ENCODE measurements at regions of chr14 and their contacts with region 1.

Region 1: GRCh38 chr14:54175298-54175942 is 218.8 kb upstream of the BMP4 start:
- DNase-seq: peak; percentile 54
- H3K4me3 ChIP-seq: no peak overlapping the region
- H3K27ac ChIP-seq: no peak overlapping the region
- H3K4me1 ChIP-seq: peaks cover 3 to 7% of the 10 kb centered on the region in 2 experiments; a peak in 2 of 4 replicates
- H3K27me3 ChIP-seq: no peaks in the 10 kb centered on the region
- CTCF ChIP-seq: peak; percentile 91
- EP300 ChIP-seq: no peak
- RAD21 ChIP-seq: peak; percentile 77

Region 2: DNA sequence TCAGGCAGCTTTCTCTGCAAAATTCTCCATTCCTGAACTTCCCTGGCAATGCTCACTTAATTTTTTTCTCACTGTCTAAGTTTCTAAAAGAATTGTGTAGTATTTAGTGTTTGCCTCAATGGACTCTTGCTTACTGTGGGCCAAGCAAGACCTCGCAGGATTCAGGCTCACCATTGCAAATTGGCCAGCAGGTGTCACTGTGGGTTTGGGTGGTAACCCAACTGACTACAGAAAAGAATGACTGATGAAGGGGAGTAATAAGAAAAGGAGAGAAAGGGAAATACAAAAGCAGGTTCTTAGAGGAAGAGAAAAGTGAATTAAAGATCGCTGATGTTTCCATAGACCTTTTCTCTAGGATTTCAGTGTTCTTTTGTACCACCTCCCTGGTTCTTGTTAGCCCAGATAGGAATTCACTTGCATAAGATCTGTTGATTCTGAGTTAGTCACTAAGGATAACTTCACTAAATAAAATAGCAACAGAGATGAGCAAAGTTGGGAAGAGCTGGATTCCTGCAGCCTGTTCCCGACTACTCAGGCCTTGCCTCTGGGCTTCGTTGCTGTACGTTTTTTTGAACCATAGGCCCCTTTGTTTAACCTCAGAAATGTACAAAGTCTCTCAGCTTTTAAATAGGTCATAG is 635.8 kb before region 1 on chr14:
- CTCF ChIA-PET with region 1: interaction called, 19 read pairs
- POLR2A ChIA-PET with region 1: no interaction called
- DNase-seq: peak; percentile 39
- H3K4me3 ChIP-seq: no peak overlapping the region; a peak in 1 of 4 replicates
- H3K27ac ChIP-seq: no peak overlapping the region
- H3K4me1 ChIP-seq: peaks cover 0 to 7% of the 10 kb centered on the region in 2 experiments; a peak in 1 of 4 replicates
- H3K27me3 ChIP-seq: no peaks in the 10 kb centered on the region; the same call in 1 of the 2 replicates
- CTCF ChIP-seq: peak; percentile 86
- EP300 ChIP-seq: no peak
- RAD21 ChIP-seq: peak; percentile 91

Region 3: GRCh38 chr14:54098536-54098935 is 76.9 kb before region 1 on chr14:
- CTCF ChIA-PET with region 1: no interaction called
- POLR2A ChIA-PET with region 1: no interaction called
- DNase-seq: no peak
- H3K4me3 ChIP-seq: no peak overlapping the region
- H3K27ac ChIP-seq: no peak overlapping the region
- H3K4me1 ChIP-seq: no peaks in the 10 kb centered on the region
- H3K27me3 ChIP-seq: no peaks in the 10 kb centered on the region
- CTCF ChIP-seq: no peak
- EP300 ChIP-seq: no peak
- RAD21 ChIP-seq: no peak

Region 4: DNA sequence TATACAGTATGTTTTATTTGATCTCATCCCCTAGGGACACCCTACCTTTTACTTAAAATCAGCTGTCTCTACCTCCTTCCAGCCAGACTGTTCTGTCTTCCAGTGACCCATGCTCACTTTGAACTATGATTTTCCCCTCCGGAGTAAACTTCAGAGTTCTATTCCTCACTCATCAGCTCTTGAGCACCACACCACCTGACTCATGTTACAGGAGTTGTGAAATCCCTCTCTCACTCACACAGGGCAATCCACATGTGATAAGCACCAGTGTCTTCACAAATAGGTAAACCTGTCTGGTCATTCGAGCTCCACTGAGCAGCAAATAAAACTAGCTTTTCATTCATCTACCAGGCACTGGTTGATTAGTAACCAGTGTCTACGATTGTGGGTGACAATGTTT is 41.5 kb before region 1 on chr14:
- CTCF ChIA-PET with region 1: interaction called, 12 read pairs
- POLR2A ChIA-PET with region 1: no interaction called
- DNase-seq: no peak
- H3K4me3 ChIP-seq: no peak overlapping the region
- H3K27ac ChIP-seq: no peak overlapping the region
- H3K4me1 ChIP-seq: no peaks in the 10 kb centered on the region
- H3K27me3 ChIP-seq: no peaks in the 10 kb centered on the region
- CTCF ChIP-seq: no peak
- EP300 ChIP-seq: no peak
- RAD21 ChIP-seq: no peak

Region 5: DNA sequence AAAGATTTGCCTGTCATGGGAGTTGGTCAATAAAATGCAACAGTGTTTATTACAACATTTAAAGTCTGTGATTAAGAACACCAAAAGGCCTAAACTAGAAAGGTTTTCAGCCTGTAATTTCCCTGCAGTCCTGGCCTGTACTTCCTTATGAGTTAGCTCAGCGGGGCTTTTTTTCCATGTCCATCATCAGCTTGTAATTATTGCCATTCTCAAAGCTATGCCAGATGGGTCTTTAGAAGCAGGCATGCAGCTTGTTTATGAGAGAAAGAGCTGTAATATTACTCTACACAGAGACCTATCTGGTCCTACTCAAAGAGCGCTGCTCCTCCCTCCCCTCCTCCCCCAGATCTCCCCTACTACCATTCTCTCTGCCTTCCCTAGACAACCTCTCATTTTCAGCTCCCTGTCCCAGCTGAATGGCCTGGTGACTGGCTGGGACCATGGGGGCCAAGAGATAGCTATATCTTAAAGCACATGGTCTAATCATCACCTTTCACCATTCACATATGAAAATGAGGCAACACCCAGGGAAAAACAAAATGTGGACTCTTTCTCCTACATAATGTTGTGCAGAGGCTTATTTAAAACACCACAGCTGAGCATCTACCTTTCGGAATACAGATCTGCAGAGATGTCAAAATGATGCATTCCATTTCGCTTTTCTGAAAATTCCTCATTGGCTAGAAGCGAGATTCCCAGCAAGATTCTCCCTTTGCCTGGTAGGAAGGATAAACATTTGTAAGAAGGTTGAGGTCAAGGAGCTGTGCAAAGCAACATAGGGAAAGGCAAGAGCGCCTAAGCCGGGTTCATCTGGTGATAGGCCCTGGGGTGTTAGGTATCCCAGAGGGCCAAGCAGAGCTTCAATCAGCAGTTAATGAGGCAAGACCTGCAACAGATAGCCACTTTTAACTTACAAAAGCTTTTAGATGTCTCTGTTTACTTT is 11.7 kb after region 1 on chr14:
- CTCF ChIA-PET with region 1: interaction called, 13 read pairs
- POLR2A ChIA-PET with region 1: no interaction called
- DNase-seq: no peak
- H3K4me3 ChIP-seq: no peak overlapping the region
- H3K27ac ChIP-seq: no peak overlapping the region; a peak in 1 of 4 replicates
- H3K4me1 ChIP-seq: peaks cover 9 to 15% of the 10 kb centered on the region in 2 experiments; a peak in 2 of 4 replicates
- H3K27me3 ChIP-seq: no peaks in the 10 kb centered on the region
- CTCF ChIP-seq: no peak
- EP300 ChIP-seq: no peak
- RAD21 ChIP-seq: no peak

Region 6: GRCh38 chr14:54387328-54387727 is 211.9 kb after region 1 on chr14:
- CTCF ChIA-PET with region 1: no interaction called
- POLR2A ChIA-PET with region 1: no interaction called
- DNase-seq: no peak
- H3K4me3 ChIP-seq: no peak overlapping the region
- H3K27ac ChIP-seq: no peak overlapping the region
- H3K4me1 ChIP-seq: no peaks in the 10 kb centered on the region
- H3K27me3 ChIP-seq: peaks cover 7% of the 10 kb centered on the region; the same call in 1 of the 2 replicates
- CTCF ChIP-seq: no peak
- EP300 ChIP-seq: no peak
- RAD21 ChIP-seq: no peak

Region 7: DNA sequence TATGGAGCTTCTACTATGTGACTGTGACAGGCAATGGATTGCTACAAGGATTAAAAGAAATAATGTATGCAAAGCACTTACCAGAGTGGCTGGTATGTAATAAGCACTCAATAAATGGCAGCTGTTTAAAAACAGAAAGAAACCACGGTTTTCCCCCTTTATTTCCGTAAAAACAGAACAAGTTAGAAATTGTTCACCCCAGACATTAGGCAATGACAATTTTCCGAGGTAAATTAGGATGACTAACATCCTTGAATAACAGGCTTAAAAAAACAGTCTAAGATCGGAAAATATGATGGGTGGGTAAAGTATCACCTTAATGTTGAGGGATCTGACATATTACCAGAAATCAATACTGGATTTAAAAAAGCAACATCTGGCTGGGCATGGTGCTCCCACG is 286.6 kb after region 1 on chr14:
- CTCF ChIA-PET with region 1: no interaction called
- POLR2A ChIA-PET with region 1: no interaction called
- DNase-seq: no peak
- H3K4me3 ChIP-seq: no peak overlapping the region
- H3K27ac ChIP-seq: no peak overlapping the region
- H3K4me1 ChIP-seq: no peaks in the 10 kb centered on the region
- H3K27me3 ChIP-seq: no peaks in the 10 kb centered on the region
- CTCF ChIP-seq: no peak
- EP300 ChIP-seq: no peak
- RAD21 ChIP-seq: no peak

Measured in SK-N-SH (cell line).